Right ventricle myocardium superior (tissue), 1 donor: ENCODE measurements at regions of chr3 and their contacts with region 1.

Region 1: GRCh38 chr3:115217678-115218451 is 70.8 kb upstream of the ZBTB20 start:
- DNase-seq: no peak
- ATAC-seq: peak; percentile 82

Region 2: DNA sequence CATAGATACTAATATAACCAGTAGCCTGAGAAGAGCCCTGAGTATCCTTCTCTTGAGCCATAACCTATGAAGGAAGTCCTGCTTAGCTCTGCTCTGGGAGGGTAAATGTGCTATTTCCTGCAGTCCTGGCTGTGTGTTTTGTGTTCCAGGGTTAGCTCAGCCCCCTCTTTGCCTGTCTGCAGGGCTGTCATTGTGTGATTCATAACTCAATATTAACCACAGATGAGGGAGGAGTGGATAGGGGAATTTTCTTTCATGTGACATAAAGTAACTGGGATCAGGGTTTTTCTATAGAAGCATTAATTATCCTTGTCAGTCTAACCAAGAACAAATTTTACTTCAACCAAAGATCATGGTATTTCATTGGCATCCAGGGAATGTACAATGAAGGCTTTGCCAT is 112.6 kb after region 1 on chr3:
- intact Hi-C with region 1: no loop called
- DNase-seq: no peak
- ATAC-seq: no peak

Region 3: DNA sequence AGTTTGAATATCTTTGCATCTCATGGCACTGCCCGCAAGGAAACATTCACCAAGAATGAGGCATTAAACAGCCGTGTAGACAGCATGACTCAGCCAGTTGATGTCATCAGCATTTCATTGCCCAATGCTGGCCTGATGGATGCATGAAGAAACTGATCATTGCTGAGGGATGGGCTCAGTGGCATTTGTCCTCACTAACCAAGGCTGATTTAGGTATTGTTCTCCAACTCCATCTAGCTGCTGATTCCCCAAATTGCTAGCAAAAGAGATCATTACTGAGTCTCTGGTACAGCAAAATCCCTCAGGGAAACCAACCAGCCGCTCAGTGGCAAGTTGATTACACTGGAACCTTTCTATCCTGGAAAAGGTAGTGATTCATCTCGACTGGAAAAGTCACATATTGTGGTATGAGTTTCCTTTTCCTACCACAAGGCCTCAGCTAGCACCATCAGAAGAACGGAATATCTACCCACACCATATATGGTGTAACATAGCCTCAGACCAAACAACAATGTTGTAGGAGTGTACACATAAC is 219.0 kb after region 1 on chr3:
- intact Hi-C with region 1: loop called (anchors 10 kb)
- DNase-seq: no peak
- ATAC-seq: no peak

Region 4: GRCh38 chr3:115571413-115571812 is 353.5 kb after region 1 on chr3:
- intact Hi-C with region 1: loop called (anchors 10 kb)
- DNase-seq: no peak
- ATAC-seq: peak; percentile 60

Region 5: DNA sequence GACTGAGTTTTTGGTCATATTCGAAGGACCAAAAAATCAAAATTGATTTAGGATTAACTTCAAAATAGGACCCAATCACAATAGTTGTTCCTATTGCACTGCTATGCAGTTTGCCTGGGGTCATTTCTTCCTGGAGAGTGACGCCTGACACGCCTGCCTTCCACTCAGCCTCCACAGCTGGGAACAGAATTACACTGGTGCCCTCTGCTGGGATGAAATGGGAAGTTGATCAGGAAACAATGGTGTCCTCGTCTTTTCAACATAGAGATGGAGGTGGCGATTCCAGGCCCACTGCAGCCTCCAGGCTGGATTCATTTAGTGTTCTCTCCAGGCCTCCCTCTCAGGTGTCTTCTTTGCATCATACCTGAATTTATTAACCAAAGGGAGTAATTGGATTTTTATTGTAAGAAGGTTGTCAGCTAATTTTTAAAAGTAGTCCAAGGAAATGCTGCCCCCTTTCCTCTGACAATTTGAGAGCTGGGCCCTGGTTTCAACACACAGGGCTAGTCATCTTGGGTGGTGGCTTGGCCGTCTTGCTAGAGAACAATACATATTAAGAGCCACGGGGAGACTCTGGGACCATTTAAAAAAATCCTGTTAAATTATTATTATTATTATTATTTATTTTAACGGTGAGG is 475.1 kb after region 1 on chr3:
- intact Hi-C with region 1: loop called (anchors 2 kb)
- DNase-seq: peak; percentile 62
- ATAC-seq: peak; percentile 98

Region 6: GRCh38 chr3:115783938-115784738 is 566.3 kb after region 1 on chr3:
- intact Hi-C with region 1: loop called (anchors 10 kb)
- DNase-seq: peak; percentile 94
- ATAC-seq: peak; percentile 97